ENCODE measurements at regions of chr12 and their contacts with region 1.

Region 1: GRCh38 chr12:45122768-45123380 is 72.0 kb upstream of the DBX2 start:
- DNase-seq: peak in 2 of 4 experiments; percentile 11 to 30
- ATAC-seq: peak; percentile 51; the same call in 1 of the 3 replicates
- H3K4me3 ChIP-seq: no peak overlapping the region
- H3K27ac ChIP-seq: no peak overlapping the region
- H3K4me1 ChIP-seq: no peaks in the 10 kb centered on the region
- H3K27me3 ChIP-seq: no peaks in the 10 kb centered on the region
- CTCF ChIP-seq: peak; percentile 44 to 60 (median 45); a peak in 5 of 6 replicates
- EP300 ChIP-seq: no peak
- POLR2A ChIP-seq: no peak
- RAD21 ChIP-seq: peak; percentile 47 to 56

Region 2: DNA sequence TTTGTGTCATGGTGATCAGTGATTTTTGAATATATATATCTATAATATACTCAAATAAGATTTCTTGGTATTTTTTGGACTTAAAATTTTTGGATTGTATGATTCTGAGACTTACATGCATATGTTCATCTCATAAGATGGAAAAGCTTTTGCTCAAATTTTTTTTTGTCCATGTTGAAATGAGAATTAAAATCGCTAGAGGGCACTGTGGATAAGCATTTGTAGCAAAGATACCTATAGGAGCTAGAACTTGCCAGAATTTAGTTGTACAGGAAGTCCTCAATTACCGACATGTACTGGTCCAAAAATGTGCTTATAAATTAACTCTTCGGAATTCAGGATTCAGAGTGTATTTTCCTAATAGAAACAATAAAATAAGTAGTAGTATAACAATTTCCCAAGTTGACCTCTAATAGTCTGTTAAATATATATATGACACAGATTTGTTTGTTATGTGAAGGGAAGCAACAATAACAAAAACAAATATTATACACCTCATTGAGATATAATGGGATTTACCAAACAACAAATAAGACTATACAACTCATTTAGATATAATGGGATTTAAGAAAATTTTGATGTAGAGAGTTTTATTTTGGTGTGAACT is 1107.4 kb before region 1 on chr12:
- CTCF ChIA-PET with region 1: no interaction called
- POLR2A ChIA-PET with region 1: no interaction called
- in situ Hi-C with region 1: no loop called
- intact Hi-C with region 1: loop called (anchors 2 kb)
- DNase-seq: peak; percentile 17 to 44 (median 25)
- ATAC-seq: peak; percentile 69
- H3K4me3 ChIP-seq: no peak overlapping the region
- H3K27ac ChIP-seq: no peak overlapping the region
- H3K4me1 ChIP-seq: no peaks in the 10 kb centered on the region
- H3K27me3 ChIP-seq: no peaks in the 10 kb centered on the region
- CTCF ChIP-seq: peak; percentile 21 to 58 (median 38); a peak in 4 of 6 replicates
- EP300 ChIP-seq: no peak
- POLR2A ChIP-seq: no peak
- RAD21 ChIP-seq: peak; percentile 66 to 69

Region 3: GRCh38 chr12:44774815-44775411 is 348.0 kb before region 1 on chr12:
- CTCF ChIA-PET with region 1: no interaction called
- POLR2A ChIA-PET with region 1: no interaction called
- in situ Hi-C with region 1: no loop called
- intact Hi-C with region 1: loop called (anchors 5 kb)
- DNase-seq: peak; percentile 30 to 53 (median 48)
- ATAC-seq: peak; percentile 75
- H3K4me3 ChIP-seq: no peak overlapping the region
- H3K27ac ChIP-seq: no peak overlapping the region
- H3K4me1 ChIP-seq: no peaks in the 10 kb centered on the region
- H3K27me3 ChIP-seq: no peaks in the 10 kb centered on the region
- CTCF ChIP-seq: peak; percentile 62 to 69 (median 66)
- EP300 ChIP-seq: no peak
- POLR2A ChIP-seq: no peak
- RAD21 ChIP-seq: peak in 1 of 2 experiments; percentile 47; a peak in 3 of 4 replicates

Region 4: DNA sequence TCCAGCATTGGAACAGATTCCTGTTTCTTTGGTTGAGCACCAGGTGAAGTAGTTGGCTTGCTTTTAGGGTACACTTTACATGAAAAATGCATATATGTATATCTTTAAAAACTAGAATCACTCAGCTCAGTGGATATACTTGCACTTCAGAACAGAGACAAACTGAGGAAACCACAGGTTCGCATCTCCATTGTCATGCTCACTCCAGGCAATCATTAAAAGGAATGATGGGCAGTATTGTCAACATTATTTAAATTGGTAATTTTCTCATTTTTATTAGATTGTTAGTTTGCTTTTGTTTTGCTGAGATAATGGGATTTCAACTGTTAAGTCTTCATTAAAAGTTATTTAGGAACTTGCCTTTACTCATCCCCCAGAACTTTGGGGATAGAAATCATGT is 175.7 kb before region 1 on chr12:
- CTCF ChIA-PET with region 1: no interaction called
- POLR2A ChIA-PET with region 1: no interaction called
- in situ Hi-C with region 1: no loop called
- intact Hi-C with region 1: loop called (anchors 2 kb)
- DNase-seq: no peak
- ATAC-seq: no peak
- H3K4me3 ChIP-seq: no peak overlapping the region
- H3K27ac ChIP-seq: no peak overlapping the region
- H3K4me1 ChIP-seq: no peaks in the 10 kb centered on the region
- H3K27me3 ChIP-seq: no peaks in the 10 kb centered on the region
- CTCF ChIP-seq: no peak
- EP300 ChIP-seq: no peak
- POLR2A ChIP-seq: no peak
- RAD21 ChIP-seq: no peak

Region 5: DNA sequence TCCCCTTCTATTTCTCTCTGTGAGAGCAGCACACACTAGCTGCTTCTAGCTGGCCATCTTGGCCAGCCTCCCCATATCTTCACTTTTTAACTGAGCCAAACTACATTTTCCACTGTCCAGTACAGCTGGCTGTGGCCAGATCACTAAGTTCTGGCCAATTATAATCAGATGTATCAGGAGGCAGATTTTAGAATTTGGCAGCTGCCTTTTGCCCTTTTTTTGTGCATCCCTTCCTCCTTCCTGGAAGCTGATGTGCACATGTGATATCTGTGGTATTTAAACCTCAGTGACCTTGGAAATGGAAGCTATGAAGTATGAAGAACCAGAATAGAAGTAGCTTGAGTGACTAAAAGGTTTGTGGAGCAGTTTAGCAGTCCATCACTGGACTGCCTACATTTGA is 43.2 kb after region 1 on chr12:
- CTCF ChIA-PET with region 1: no interaction called
- POLR2A ChIA-PET with region 1: no interaction called
- in situ Hi-C with region 1: no loop called
- intact Hi-C with region 1: no loop called
- DNase-seq: no peak
- ATAC-seq: no peak
- H3K4me3 ChIP-seq: no peak overlapping the region
- H3K27ac ChIP-seq: no peak overlapping the region
- H3K4me1 ChIP-seq: no peaks in the 10 kb centered on the region; a peak in 1 of 5 replicates
- H3K27me3 ChIP-seq: no peaks in the 10 kb centered on the region
- CTCF ChIP-seq: no peak
- EP300 ChIP-seq: no peak
- POLR2A ChIP-seq: no peak
- RAD21 ChIP-seq: no peak

Region 6: GRCh38 chr12:45627407-45628069 is 504.7 kb after region 1 on chr12:
- CTCF ChIA-PET with region 1: no interaction called
- POLR2A ChIA-PET with region 1: no interaction called
- in situ Hi-C with region 1: no loop called
- intact Hi-C with region 1: no loop called
- DNase-seq: no peak
- ATAC-seq: no peak
- H3K4me3 ChIP-seq: no peak overlapping the region
- H3K27ac ChIP-seq: no peak overlapping the region
- H3K4me1 ChIP-seq: no peaks in the 10 kb centered on the region
- H3K27me3 ChIP-seq: peaks cover 5 to 15% of the 10 kb centered on the region in 2 experiments; a peak in 4 of 5 replicates
- CTCF ChIP-seq: no peak
- EP300 ChIP-seq: no peak
- POLR2A ChIP-seq: no peak
- RAD21 ChIP-seq: no peak

Measured in K562 (cell line).